Caco-2 (cell line): ENCODE measurements at regions of chrX and their contacts with region 1.

Region 1: DNA sequence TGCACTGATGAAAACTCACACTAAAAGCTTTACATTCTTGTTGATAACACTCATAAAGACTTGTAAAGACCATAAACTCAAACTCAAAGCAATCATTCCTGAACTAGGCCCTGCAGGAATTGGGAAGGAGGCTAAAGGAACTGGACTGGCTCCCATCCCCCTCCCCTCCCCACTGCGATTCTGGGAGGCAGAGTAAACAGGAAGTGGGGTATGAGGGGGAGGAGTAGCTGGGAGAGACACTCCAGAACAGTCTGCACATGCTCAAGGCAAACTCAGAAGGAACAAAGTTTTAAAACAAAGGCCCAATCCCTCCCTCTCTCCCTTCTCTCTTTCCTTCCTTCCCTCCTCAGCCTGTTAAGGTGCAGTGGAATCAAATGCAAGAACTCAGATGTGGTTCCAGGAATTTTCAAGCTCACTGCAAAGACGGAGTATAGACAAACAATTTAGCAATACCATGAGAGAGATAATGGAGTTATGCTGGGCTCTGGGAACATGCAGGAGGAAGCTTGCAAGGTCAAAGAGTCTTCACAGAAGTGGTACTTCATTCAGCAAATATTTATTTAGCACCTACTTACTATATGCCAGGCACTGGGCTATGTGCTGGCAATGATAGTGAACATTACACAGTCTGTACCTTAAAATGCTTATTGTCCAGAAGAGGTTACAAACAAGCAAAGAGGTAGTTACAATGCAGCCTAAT is 15.9 kb downstream of the MID1IP1 start:
- DNase-seq: peak; percentile 50 to 53
- H3K4me3 ChIP-seq: no peak overlapping the region
- H3K4me3 Mint-ChIP-seq: no peak overlapping the region
- H3K27ac Mint-ChIP-seq: no peak overlapping the region
- H3K4me1 ChIP-seq: no peaks in the 10 kb centered on the region; the same call in 1 of the 2 replicates
- H3K4me1 Mint-ChIP-seq: no peaks in the 10 kb centered on the region
- H3K27me3 ChIP-seq: no peaks in the 10 kb centered on the region
- H3K27me3 Mint-ChIP-seq: no peaks in the 10 kb centered on the region
- CTCF ChIP-seq: no peak

Region 2: DNA sequence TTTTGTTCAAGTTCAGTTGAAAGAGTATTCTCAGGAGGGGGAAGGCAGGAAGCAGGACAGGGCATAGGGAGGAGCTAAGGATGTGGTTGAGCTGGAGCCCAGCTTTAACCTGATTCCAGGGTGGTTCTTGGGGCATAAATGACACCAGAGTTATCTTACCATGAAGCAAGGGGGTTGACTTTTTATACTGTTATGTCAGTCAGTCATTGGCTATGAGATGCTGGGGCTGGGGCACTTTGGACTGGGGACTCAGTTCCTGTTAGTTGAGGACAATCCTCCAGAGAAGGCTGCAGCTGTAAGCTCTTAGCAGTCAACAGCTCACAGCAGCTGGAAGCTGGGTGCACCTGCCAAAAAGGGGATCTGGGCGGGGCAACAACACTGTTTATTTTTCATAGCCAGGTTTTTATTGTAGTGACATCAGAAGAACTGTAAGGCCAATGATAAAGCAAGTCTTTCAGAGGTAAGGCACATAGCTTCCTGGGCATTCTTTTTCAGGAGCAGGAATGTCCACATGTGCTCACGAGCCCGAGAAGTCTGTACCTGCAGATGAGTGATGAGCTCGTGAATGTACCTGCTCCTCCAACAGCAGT is 62.6 kb after region 1 on chrX:
- CTCF ChIA-PET with region 1: no interaction called
- POLR2A ChIA-PET with region 1: no interaction called
- intact Hi-C with region 1: loop called (anchors 10 kb)
- DNase-seq: no peak
- H3K4me3 ChIP-seq: no peak overlapping the region
- H3K4me3 Mint-ChIP-seq: no peak overlapping the region
- H3K27ac Mint-ChIP-seq: no peak overlapping the region
- H3K4me1 ChIP-seq: no peaks in the 10 kb centered on the region
- H3K4me1 Mint-ChIP-seq: no peaks in the 10 kb centered on the region
- H3K27me3 ChIP-seq: no peaks in the 10 kb centered on the region
- H3K27me3 Mint-ChIP-seq: no peaks in the 10 kb centered on the region
- CTCF ChIP-seq: no peak